ENCODE measurements at regions of chr3 and their contacts with region 1.

Region 1: DNA sequence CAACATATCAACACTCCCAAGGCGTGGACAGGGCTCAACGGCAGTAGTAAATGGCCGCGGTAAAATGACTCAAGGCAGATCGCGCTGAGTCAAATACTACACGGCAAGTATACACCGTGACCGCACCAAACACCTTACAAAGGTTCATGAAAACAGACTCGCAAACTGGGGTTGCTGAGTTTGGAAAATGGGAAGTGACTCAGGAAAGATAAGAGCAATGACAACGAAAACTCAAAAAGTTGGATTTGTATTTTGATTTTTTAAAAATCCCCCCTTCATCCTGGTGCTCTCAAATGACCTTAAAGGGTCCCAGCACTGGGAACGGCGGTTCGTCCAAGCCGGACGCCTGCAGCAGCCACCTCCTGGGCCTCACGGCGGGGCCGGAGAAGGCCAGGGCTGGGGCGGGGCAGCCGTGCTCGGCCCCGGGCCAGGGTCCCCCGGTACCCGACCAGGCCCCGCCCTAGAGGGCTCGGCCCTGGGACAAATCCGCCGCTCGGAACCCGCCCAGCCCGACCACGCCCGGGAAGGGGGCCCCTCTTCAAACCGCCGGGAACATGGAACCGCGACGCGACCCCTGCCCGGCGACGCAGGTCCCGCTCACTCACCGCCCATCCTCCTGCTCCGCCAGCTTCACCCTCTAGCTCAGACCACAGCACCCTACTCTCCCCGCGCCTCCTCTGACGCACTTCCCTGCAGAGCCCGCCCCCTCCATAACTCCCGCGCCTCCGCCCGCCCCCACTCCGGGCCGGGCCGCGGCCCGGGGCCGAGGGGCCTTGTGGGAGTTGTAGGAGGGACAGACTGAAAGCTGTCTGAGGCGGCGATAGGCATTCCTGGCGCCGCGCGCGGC is at the start of gene CLDND1:
- DNase-seq: peak; percentile 90 to 97 (median 94)
- ATAC-seq: peak; percentile 96
- H3K4me3 ChIP-seq: peak within 1 kb of the TSS; percentile 68
- H3K4me3 Mint-ChIP-seq: peak within 1 kb of the TSS; percentile 95
- H3K27ac ChIP-seq: peak within 1 kb of the TSS; percentile 66 to 84
- H3K27ac Mint-ChIP-seq: peak within 1 kb of the TSS; percentile 79
- H3K4me1 ChIP-seq: peaks cover 23% of the 10 kb centered on the region
- H3K4me1 Mint-ChIP-seq: peaks cover 55% of the 10 kb centered on the region
- H3K27me3 ChIP-seq: no peaks in the 10 kb centered on the region
- H3K27me3 Mint-ChIP-seq: no peaks in the 10 kb centered on the region
- CTCF ChIP-seq: no peak
- total RNA-seq, gene CLDND1: 168 to 185 TPM

Region 2: GRCh38 chr3:97764407-97765238 is 757.8 kb before region 1 on chr3 and contains the start of gene ARL6:
- CTCF ChIA-PET with region 1: no interaction called
- POLR2A ChIA-PET with region 1: no interaction called
- intact Hi-C with region 1: loop called (anchors 2 to 5 kb)
- DNase-seq: peak; percentile 38 to 85 (median 60)
- ATAC-seq: peak; percentile 91
- H3K4me3 ChIP-seq: peak within 1 kb of the TSS; percentile 87
- H3K4me3 Mint-ChIP-seq: peak within 1 kb of the TSS; percentile 96
- H3K27ac ChIP-seq: peak within 1 kb of the TSS; percentile 62 to 76
- H3K27ac Mint-ChIP-seq: peak within 1 kb of the TSS; percentile 87
- H3K4me1 ChIP-seq: peaks cover 9% of the 10 kb centered on the region
- H3K4me1 Mint-ChIP-seq: peaks cover 39% of the 10 kb centered on the region
- H3K27me3 ChIP-seq: no peaks in the 10 kb centered on the region
- H3K27me3 Mint-ChIP-seq: no peaks in the 10 kb centered on the region
- CTCF ChIP-seq: no peak
- total RNA-seq, gene ARL6: 1.3 to 2.1 TPM

Region 3: DNA sequence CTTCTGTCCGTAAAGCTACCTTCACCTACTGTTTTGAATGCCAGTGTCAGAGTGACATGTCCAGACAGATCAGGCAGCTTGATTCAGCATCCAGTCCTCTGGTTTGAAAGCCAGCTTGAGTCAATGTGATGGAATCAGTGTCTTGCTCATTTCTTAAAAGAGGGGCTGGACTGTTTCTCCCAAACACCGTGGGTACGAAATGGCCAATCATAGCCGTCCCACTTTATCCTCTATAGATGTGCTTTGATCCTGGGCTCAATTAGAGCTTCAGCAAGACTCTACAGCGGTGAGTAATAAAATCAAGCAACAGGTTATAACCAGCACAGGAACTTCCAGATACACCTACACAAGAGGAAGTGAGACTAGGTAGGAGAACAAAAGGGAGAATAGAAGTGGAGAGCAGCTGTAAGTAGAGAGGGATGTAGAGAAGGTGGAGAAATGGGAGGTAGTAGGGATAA is 76.5 kb before region 1 on chr3:
- CTCF ChIA-PET with region 1: no interaction called
- POLR2A ChIA-PET with region 1: no interaction called
- intact Hi-C with region 1: no loop called
- DNase-seq: no peak
- ATAC-seq: no peak
- H3K4me3 ChIP-seq: no peak overlapping the region
- H3K4me3 Mint-ChIP-seq: no peak overlapping the region
- H3K27ac ChIP-seq: no peak overlapping the region
- H3K27ac Mint-ChIP-seq: no peak overlapping the region
- H3K4me1 ChIP-seq: peaks cover 4% of the 10 kb centered on the region
- H3K4me1 Mint-ChIP-seq: no peaks in the 10 kb centered on the region
- H3K27me3 ChIP-seq: no peaks in the 10 kb centered on the region
- H3K27me3 Mint-ChIP-seq: peaks cover 15% of the 10 kb centered on the region
- CTCF ChIP-seq: no peak

Region 4: GRCh38 chr3:98536456-98537017 is 14.1 kb after region 1 on chr3:
- CTCF ChIA-PET with region 1: interaction called, 3 read pairs
- POLR2A ChIA-PET with region 1: interaction called, 18 read pairs
- intact Hi-C with region 1: no loop called
- DNase-seq: no peak
- ATAC-seq: no peak
- H3K4me3 ChIP-seq: peak overlapping the region; percentile 16
- H3K4me3 Mint-ChIP-seq: peak overlapping the region; percentile 9
- H3K27ac ChIP-seq: no peak overlapping the region
- H3K27ac Mint-ChIP-seq: peak overlapping the region; percentile 2
- H3K4me1 ChIP-seq: no peaks in the 10 kb centered on the region
- H3K4me1 Mint-ChIP-seq: peaks cover 8% of the 10 kb centered on the region
- H3K27me3 ChIP-seq: no peaks in the 10 kb centered on the region
- H3K27me3 Mint-ChIP-seq: no peaks in the 10 kb centered on the region
- CTCF ChIP-seq: no peak

Region 5: DNA sequence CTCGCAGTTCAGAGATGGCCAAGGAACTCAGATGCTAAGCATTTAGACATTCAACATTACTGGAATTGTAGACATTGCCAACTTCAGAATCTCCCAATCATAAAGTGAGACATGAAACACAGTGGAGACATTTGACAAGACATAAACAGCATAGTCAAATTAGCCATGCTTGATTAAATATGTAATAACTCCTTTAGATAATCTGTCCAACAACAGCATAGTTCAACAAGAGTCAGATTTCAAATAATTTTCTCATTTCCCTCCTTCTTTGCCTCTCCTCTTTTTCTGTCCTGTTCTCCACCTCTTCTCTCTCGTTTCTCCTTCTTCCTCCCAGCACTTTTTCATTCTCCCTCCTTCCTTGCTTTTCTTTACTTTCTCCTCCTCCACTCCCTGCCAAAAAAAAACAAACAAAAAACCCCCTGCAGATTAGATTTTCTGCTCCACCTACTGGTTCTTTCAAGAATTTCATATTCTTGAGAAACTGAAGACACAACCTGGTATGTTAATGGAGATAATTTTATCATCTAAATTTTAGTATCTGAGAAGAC is 50.8 kb after region 1 on chr3:
- CTCF ChIA-PET with region 1: interaction called, 6 read pairs
- POLR2A ChIA-PET with region 1: interaction called, 17 read pairs
- intact Hi-C with region 1: loop called (anchors 1 to 5 kb)
- DNase-seq: peak in 3 of 14 experiments; percentile 59 to 65 (median 63)
- ATAC-seq: peak; percentile 56
- H3K4me3 ChIP-seq: no peak overlapping the region
- H3K4me3 Mint-ChIP-seq: no peak overlapping the region
- H3K27ac ChIP-seq: no peak overlapping the region
- H3K27ac Mint-ChIP-seq: peak overlapping the region; percentile 3
- H3K4me1 ChIP-seq: no peaks in the 10 kb centered on the region
- H3K4me1 Mint-ChIP-seq: peaks cover 17% of the 10 kb centered on the region
- H3K27me3 ChIP-seq: no peaks in the 10 kb centered on the region
- H3K27me3 Mint-ChIP-seq: no peaks in the 10 kb centered on the region
- CTCF ChIP-seq: peak; percentile 74

Region 6: GRCh38 chr3:98901392-98902350 is 379.2 kb after region 1 on chr3 and contains the start of gene DCBLD2:
- CTCF ChIA-PET with region 1: no interaction called
- POLR2A ChIA-PET with region 1: interaction called, 6 read pairs
- intact Hi-C with region 1: loop called in 1 of 2 experiments (anchors 5 kb)
- DNase-seq: peak; percentile 79 to 96 (median 88)
- ATAC-seq: peak; percentile 98
- H3K4me3 ChIP-seq: peak within 1 kb of the TSS; percentile 67
- H3K4me3 Mint-ChIP-seq: peak within 1 kb of the TSS; percentile 93
- H3K27ac ChIP-seq: peak within 1 kb of the TSS in 1 of 2 donors; percentile 45
- H3K27ac Mint-ChIP-seq: peak within 1 kb of the TSS; percentile 76
- H3K4me1 ChIP-seq: peaks cover 13% of the 10 kb centered on the region
- H3K4me1 Mint-ChIP-seq: peaks cover 26% of the 10 kb centered on the region
- H3K27me3 ChIP-seq: peaks cover 0 to 2% of the 10 kb centered on the region in 2 experiments
- H3K27me3 Mint-ChIP-seq: peaks cover 12% of the 10 kb centered on the region
- CTCF ChIP-seq: no peak
- total RNA-seq, gene DCBLD2: 2.2 to 2.5 TPM

Region 7: DNA sequence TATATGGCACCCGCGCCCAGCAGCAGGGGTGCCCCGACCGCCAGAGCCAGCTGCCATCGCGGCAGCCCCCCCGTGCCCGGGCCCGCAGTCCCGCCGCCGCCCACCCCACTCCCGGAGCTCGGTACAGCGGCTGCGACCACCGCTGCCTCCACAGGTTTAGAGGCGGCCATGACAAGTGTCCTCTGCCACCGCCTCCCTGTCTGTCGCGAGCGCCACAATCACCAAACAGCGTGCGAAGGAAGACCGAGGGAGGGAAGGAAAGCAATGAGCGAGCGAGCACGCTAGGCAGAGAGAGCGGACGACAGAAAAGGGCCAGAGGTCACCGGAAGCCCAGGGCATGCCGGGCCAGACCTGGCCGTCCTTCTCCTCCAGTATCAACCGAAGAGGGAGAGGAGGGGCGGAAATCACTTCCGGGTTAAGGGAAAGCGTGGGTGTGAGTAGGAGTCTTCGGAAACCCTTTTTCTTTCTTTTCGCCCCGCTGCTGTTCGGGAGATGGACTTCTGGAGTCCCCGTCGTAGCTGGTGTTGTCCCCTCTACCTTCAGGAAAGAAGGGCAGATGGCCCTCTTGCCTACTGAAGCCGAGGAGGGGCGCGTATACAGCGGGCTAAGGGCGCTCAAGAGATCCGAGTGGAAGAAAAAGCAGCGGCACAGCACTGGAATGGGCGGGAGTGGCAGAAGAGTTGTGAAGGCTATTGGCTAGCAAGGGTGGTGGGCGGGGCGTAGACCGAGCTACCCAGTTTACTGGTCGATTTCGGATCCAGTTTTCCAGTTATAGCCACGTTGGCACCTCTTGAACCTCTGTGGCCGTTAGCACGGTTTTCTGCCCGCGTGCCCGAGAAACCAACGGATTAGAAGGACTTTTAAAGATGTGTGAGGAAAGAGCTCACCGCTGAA is 1878.6 kb after region 1 on chr3 and contains the starts of genes LNP1 and TOMM70:
- CTCF ChIA-PET with region 1: no interaction called
- POLR2A ChIA-PET with region 1: no interaction called
- intact Hi-C with region 1: loop called in 1 of 2 experiments (anchors 10 kb)
- DNase-seq: peak; percentile 86 to 97 (median 92)
- ATAC-seq: peak; percentile 88
- H3K4me3 ChIP-seq: peak within 1 kb of the TSS; percentile 73
- H3K4me3 Mint-ChIP-seq: peak within 1 kb of the TSS; percentile 94
- H3K27ac ChIP-seq: peak within 1 kb of the TSS; percentile 76 to 85
- H3K27ac Mint-ChIP-seq: peak within 1 kb of the TSS; percentile 92
- H3K4me1 ChIP-seq: peaks cover 26% of the 10 kb centered on the region
- H3K4me1 Mint-ChIP-seq: peaks cover 84% of the 10 kb centered on the region
- H3K27me3 ChIP-seq: no peaks in the 10 kb centered on the region
- H3K27me3 Mint-ChIP-seq: no peaks in the 10 kb centered on the region
- CTCF ChIP-seq: no peak
- total RNA-seq, gene LNP1: 0.47 to 0.70 TPM
- total RNA-seq, gene TOMM70: 20.9 to 21.6 TPM